PC-3 (cell line): ENCODE measurements at regions of chr5 and their contacts with region 1.

Region 1: DNA sequence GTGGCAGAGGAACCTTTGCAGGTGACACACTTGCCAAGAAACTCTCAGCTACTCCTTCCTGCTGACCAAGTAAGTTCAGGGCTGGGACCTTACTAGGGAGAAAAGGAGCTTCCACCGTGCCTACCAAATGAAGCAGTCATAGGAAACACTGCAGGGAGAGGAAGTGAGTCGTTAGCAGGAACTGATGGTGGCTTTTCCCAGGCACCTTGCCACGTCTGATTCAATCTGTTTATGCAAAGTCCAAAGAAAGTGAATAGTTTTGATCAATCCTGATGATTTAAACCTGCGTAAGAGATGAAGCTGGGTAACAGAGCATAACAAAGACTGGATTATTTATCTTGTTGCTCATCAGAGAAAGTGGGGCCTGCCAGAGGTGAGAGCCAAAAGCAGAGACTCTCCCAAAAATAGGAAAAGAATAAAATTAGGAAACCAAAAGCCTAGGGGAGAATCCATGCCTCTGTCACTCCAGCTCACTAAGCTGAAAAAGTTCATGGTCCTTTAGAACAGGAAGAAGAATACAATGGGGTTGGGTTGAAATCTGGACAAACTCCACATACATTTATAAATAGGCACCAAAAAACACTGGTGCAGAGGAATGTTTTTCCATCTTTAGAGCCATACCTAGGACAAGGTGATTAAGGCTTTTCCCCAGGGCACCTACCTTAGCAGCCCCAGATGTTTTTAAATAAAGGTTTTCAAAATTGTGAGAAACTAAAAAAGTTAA is 9.3 kb upstream of the PFDN1 start:
- DNase-seq: peak; percentile 98
- ATAC-seq: peak; percentile 93
- H3K4me3 ChIP-seq: no peak overlapping the region; the same call in 1 of the 2 replicates
- H3K27ac ChIP-seq: peak overlapping the region; percentile 98
- H3K4me1 ChIP-seq: peaks cover 41% of the 10 kb centered on the region
- H3K27me3 ChIP-seq: no peaks in the 10 kb centered on the region
- CTCF ChIP-seq: no peak

Region 2: DNA sequence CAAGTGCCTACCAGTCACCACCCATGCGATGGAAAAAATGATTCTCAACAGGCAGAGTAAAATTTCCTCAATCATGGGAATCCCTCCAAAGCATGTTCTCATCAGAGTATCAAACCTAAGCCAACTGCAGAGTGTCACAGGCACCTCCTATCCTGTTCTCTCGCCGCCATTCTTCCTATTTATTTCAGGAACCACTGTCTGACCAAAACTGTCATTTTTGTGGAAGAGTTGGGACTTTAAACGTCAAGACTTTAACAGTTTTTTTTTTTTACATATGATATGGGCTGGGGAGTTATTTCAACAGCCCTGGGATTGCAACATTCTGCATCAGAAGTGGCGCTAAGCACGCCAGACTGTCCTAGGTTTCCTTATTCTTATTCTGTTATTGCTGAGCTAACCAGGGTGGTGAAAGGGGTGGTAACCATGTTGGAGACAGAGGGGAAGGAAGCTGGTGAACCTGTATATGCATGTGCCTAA is 38.8 kb before region 1 on chr5:
- CTCF ChIA-PET with region 1: no interaction called
- POLR2A ChIA-PET with region 1: no interaction called
- intact Hi-C with region 1: no loop called
- DNase-seq: no peak
- ATAC-seq: no peak
- H3K4me3 ChIP-seq: no peak overlapping the region
- H3K27ac ChIP-seq: no peak overlapping the region
- H3K4me1 ChIP-seq: no peaks in the 10 kb centered on the region
- H3K27me3 ChIP-seq: no peaks in the 10 kb centered on the region
- CTCF ChIP-seq: no peak

Region 3: DNA sequence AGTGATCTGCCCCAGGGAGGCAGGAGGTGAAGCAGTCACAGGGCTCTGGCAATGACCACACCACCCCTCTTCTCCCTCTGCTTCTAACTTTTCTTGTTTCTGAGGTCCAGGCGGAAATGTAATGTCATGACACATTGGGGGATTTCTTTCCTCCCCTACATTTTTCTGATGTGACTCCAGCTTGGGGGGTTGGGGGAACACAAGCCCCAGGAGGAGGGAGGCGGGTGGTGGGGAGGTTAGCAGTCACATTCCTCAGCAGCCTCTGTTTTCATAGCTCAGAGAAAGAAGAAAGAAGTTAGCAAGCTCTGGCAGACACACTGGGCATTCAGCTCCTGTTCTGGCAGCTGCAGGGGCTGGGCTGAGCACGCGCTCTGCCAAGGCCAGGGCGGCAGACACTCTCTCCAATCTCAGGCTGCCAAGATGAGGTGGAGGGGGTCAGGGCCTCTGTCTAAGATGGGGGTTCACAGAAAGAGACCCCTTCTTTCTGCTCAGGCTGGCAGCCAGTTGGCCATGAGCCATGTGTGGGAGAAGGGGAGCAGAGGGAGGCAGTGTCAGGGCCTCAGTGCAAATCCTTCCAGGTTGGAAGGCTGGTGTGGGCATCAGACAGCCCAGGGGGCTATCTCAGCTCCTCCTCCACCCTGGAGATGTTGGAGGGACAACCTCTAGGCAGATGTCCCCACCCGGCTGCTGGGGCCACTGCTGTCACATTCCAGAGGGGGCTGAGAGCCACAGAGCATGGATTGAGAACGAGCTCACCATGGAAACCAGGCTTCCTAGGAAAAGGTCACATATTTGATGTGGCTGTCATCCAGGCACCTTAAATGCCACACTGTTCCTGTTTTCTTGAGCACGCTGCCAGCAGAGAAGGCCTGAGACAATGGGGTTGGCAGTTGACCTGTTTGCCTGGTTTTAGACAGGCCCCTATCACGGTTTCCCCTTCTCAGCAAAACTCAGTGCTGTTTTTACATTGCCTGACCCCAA is 10.8 kb after region 1 on chr5:
- CTCF ChIA-PET with region 1: no interaction called
- POLR2A ChIA-PET with region 1: interaction called, 10 read pairs
- intact Hi-C with region 1: no loop called
- DNase-seq: peak; percentile 93
- ATAC-seq: peak; percentile 76
- H3K4me3 ChIP-seq: peak overlapping the region; percentile 22; the same call in 1 of the 2 replicates
- H3K27ac ChIP-seq: peak overlapping the region; percentile 98
- H3K4me1 ChIP-seq: peaks cover 54% of the 10 kb centered on the region
- H3K27me3 ChIP-seq: no peaks in the 10 kb centered on the region
- CTCF ChIP-seq: no peak